ENCODE measurements at regions of chr18 and their contacts with region 1.

Region 1: GRCh38 chr18:24176727-24177416 is 38.0 kb downstream of the CABYR start:
- DNase-seq: peak; percentile 41
- ATAC-seq: peak; percentile 95
- H3K4me3 Mint-ChIP-seq: peak overlapping the region; percentile 79
- H3K27ac Mint-ChIP-seq: peak overlapping the region; percentile 95
- H3K4me1 Mint-ChIP-seq: peaks cover 18% of the 10 kb centered on the region
- H3K27me3 Mint-ChIP-seq: no peaks in the 10 kb centered on the region
- CTCF ChIP-seq: no peak

Region 2: DNA sequence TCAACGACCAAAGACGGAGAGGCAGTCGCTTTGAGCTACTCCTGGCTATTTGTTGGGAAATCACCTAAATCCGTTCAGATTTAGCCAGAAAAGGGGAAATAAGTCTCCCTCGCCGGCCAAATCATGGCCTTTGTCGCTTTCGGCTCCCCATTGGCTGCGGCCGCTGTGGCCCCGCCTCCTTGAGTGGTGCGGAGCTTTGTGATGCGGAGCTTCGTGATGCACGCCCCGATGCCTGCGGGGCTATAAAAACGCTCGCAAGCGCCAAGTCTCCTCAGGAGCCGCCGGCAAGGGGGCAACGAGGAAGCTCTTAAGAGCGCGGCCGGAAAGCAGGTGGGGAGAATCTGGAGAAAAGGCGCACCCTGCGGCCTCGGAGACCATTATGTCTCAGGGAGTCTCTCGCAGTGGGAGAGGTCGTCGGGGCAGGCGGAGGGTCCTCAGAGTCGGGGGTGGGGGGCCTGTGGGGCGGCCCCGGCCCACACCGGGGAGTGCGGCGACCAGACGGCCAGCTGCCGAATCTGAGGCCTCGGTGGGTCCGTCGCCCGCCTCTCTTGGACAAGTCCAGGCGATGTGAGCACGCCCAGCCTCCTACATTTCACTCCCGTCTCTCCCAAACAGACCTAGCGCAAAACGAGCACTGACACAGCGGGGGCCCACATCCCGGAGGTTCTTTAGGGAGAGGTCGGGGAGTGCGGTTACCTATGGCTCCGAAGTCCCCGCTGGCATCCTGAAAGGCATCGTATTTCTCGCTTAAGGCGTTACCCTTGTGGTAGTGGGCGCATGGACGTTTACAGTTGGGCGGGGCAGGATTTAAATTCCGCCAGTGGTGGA is 37.9 kb before region 1 on chr18 and contains the start of gene CABYR:
- CTCF ChIA-PET with region 1: no interaction called
- POLR2A ChIA-PET with region 1: interaction called, 8 read pairs
- intact Hi-C with region 1: loop called (anchors 1 kb)
- DNase-seq: peak; percentile 58
- ATAC-seq: peak; percentile 96
- H3K4me3 Mint-ChIP-seq: peak within 1 kb of the TSS; percentile 87
- H3K27ac Mint-ChIP-seq: peak within 1 kb of the TSS; percentile 50
- H3K4me1 Mint-ChIP-seq: peaks cover 16% of the 10 kb centered on the region
- H3K27me3 Mint-ChIP-seq: peaks cover 6% of the 10 kb centered on the region
- CTCF ChIP-seq: no peak
- total RNA-seq, gene CABYR: 2.7 and 2.8 TPM in 2 replicates

Region 3: DNA sequence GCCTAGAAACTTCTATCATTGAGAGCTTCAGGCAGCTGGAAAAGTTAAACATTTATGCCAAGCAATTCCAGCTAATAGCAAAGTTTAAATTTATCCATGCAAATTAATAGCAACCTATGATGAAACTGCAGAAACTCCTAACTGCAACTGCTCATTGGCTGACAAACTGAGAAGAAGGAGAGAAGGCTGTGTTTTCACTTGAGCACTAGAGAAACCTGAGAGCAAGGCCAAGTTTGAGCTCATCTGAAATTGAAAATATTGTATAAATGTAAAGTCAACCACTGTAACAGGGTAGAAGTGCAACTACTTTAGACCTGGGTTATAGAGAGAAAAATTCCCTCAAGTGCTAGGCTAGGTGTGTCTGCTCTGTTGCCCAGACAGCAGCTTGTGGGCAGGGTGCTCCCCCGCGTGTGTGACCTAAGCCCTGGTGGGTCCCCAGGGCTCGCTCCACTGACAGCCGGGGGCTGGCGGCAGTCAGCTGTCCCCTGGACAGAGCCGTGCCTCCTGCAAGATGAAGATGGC is 12.2 kb after region 1 on chr18:
- CTCF ChIA-PET with region 1: interaction called, 28 read pairs
- POLR2A ChIA-PET with region 1: interaction called, 4 read pairs
- intact Hi-C with region 1: loop called (anchors 1 kb)
- DNase-seq: no peak
- ATAC-seq: peak; percentile 62
- H3K4me3 Mint-ChIP-seq: no peak overlapping the region
- H3K27ac Mint-ChIP-seq: no peak overlapping the region
- H3K4me1 Mint-ChIP-seq: peaks cover 21% of the 10 kb centered on the region
- H3K27me3 Mint-ChIP-seq: peaks cover 13% of the 10 kb centered on the region
- CTCF ChIP-seq: no peak

Region 4: DNA sequence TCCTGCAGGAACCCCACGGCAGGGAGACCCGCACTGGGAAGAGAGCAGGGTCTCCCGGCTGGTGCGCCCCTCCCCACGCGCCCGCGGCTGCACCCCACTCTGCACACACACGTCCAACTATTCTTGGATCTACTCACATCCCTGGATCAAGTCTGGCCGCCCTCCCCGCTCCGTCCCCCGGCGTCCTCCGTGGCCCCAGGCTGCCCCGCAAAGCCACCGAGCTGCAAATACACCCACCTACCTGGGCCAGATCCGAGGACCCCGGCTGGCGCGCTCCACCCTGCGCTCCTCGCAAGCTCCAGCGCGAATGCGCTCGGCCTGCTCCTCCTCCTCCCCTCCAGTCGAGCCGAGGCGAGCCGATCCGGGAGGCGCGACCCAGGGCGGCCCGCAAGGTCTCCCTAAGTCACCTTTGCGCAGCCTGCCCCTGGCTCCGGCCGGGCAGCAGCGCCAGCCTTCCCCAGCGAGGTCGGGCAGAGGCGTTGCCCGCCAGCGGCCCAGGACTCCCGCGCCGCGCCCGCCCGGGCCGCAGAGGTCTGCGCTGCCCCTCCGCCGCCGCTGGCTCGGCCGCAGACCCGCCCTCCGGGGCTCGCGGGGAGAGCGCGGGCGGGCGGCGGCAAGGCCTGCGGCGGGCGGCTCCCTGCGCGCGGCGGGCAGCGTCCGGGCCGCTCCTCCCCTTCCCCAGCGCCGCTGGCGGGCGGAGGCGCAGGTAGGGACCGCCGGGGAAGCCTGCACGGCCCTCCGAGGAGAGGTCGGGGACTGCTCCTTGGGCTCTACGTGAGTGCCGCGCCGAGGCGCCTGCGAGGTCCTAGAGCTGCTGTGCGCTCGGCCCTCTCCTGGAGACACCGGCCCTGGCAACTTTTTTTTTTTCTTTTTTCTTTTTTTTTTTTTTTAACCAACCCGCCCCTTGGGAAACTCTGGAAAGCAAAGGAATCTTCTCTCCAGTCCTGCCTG is 94.8 kb after region 1 on chr18:
- CTCF ChIA-PET with region 1: interaction called, 6 read pairs
- POLR2A ChIA-PET with region 1: no interaction called
- intact Hi-C with region 1: loop called (anchors 1 kb)
- DNase-seq: peak; percentile 22
- ATAC-seq: peak; percentile 68
- H3K4me3 Mint-ChIP-seq: peak overlapping the region; percentile 73
- H3K27ac Mint-ChIP-seq: no peak overlapping the region
- H3K4me1 Mint-ChIP-seq: peaks cover 11% of the 10 kb centered on the region
- H3K27me3 Mint-ChIP-seq: peaks cover 37% of the 10 kb centered on the region
- CTCF ChIP-seq: no peak

Region 5: GRCh38 chr18:24362758-24363157 is 185.9 kb after region 1 on chr18:
- CTCF ChIA-PET with region 1: interaction called, 7 read pairs
- POLR2A ChIA-PET with region 1: interaction called, 3 read pairs
- intact Hi-C with region 1: loop called (anchors 1 kb)
- DNase-seq: no peak
- ATAC-seq: no peak
- H3K4me3 Mint-ChIP-seq: no peak overlapping the region
- H3K27ac Mint-ChIP-seq: no peak overlapping the region
- H3K4me1 Mint-ChIP-seq: no peaks in the 10 kb centered on the region
- H3K27me3 Mint-ChIP-seq: peaks cover 2% of the 10 kb centered on the region
- CTCF ChIP-seq: no peak

Region 6: GRCh38 chr18:24426398-24427294 is 249.8 kb after region 1 on chr18 and contains the start of gene IMPACT:
- CTCF ChIA-PET with region 1: no interaction called
- POLR2A ChIA-PET with region 1: interaction called, 8 read pairs
- intact Hi-C with region 1: loop called (anchors 5 kb)
- DNase-seq: peak; percentile 80
- ATAC-seq: peak; percentile 91
- H3K4me3 Mint-ChIP-seq: peak within 1 kb of the TSS; percentile 93
- H3K27ac Mint-ChIP-seq: peak within 1 kb of the TSS; percentile 87
- H3K4me1 Mint-ChIP-seq: peaks cover 20% of the 10 kb centered on the region
- H3K27me3 Mint-ChIP-seq: peaks cover 23% of the 10 kb centered on the region
- CTCF ChIP-seq: no peak
- total RNA-seq, gene IMPACT: 11.6 and 17.4 TPM in 2 replicates